ENCODE measurements at regions of chr1 and their contacts with region 1.

Region 1: GRCh38 chr1:28602536-28603439 is 10.7 kb downstream of the RAB42 start:
- DNase-seq: peak; percentile 48
- ATAC-seq: peak; percentile 82

Region 2: DNA sequence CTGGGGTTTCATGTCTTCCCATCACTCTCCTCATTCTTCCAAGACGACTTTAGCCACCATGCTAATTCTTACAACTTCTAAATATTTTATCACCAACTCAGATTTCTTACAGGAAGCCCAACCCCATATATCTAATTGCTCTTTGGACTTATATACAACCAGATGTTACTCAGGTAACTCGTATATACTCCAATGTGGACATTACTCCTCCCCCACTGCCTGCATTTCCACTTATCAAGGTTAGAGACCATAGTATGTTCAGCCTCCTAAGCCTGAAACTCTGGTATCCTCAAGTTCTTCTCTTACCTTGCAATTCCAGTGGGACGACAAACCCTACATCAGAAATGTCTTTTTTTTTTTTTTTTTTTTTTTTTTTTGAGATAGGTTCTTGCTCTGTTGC is 99.7 kb before region 1 on chr1:
- intact Hi-C with region 1: no loop called
- DNase-seq: no peak
- ATAC-seq: no peak

Region 3: GRCh38 chr1:28518000-28518744 is 84.6 kb before region 1 on chr1:
- intact Hi-C with region 1: loop called (anchors 10 kb)
- DNase-seq: peak; percentile 96
- ATAC-seq: peak; percentile 97

Measured in Right ventricle myocardium superior (tissue), 1 donor.